PC-3 (cell line): ENCODE measurements at regions of chr3 and their contacts with region 1.

Region 1: GRCh38 chr3:96959901-96960641 is 145.7 kb downstream of the EPHA6 start:
- DNase-seq: peak; percentile 80
- ATAC-seq: peak; percentile 92
- H3K4me3 ChIP-seq: no peak overlapping the region
- H3K27ac ChIP-seq: peak overlapping the region; percentile 60
- H3K4me1 ChIP-seq: peaks cover 18% of the 10 kb centered on the region
- H3K27me3 ChIP-seq: no peaks in the 10 kb centered on the region
- CTCF ChIP-seq: no peak

Region 2: GRCh38 chr3:96931119-96931862 is 28.8 kb before region 1 on chr3:
- CTCF ChIA-PET with region 1: no interaction called
- POLR2A ChIA-PET with region 1: no interaction called
- intact Hi-C with region 1: no loop called
- DNase-seq: no peak
- ATAC-seq: no peak
- H3K4me3 ChIP-seq: no peak overlapping the region
- H3K27ac ChIP-seq: no peak overlapping the region
- H3K4me1 ChIP-seq: no peaks in the 10 kb centered on the region
- H3K27me3 ChIP-seq: no peaks in the 10 kb centered on the region
- CTCF ChIP-seq: no peak

Region 3: DNA sequence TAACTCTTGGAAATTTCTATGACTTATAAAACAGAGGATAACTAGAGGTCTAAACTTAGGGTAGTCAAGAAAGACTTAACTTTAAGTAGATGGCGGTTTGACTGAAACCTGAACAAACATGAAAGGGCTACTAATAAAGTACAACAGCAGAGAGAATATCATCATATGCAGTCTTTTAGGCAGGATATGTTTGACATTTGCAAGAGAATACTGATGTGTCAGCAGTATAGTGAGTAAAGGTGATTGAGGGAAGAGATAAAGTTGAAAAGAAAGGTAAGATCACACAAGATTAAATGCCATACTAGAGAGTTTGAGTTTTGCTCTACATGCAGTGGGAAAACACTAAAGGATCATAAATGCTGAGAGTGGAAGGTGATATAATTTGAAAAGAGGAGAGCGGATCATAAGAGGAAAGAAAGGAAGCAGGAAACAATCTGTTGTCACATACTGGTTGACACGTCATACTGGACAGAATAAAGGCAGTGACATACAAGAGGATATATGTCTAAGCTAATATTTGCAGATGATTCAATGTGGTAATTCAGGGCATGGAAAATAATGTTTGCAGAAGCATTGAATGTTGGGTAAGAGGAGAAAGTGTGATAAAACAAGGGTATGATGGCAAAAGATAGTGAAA is 77.3 kb after region 1 on chr3:
- CTCF ChIA-PET with region 1: no interaction called
- POLR2A ChIA-PET with region 1: no interaction called
- intact Hi-C with region 1: loop called (anchors 5 kb)
- DNase-seq: peak; percentile 68
- ATAC-seq: peak; percentile 83
- H3K4me3 ChIP-seq: no peak overlapping the region
- H3K27ac ChIP-seq: peak overlapping the region; percentile 75
- H3K4me1 ChIP-seq: peaks cover 12% of the 10 kb centered on the region
- H3K27me3 ChIP-seq: no peaks in the 10 kb centered on the region
- CTCF ChIP-seq: no peak